OCI-LY7 (cell line): ENCODE measurements at regions of chr21 and their contacts with region 1.

Region 1: GRCh38 chr21:33324291-33325221 is at the start of gene IFNAR1:
- DNase-seq: peak; percentile 98
- H3K4me3 ChIP-seq: peak within 1 kb of the TSS; percentile 79
- H3K27ac ChIP-seq: peak within 1 kb of the TSS; percentile 87
- H3K4me1 ChIP-seq: peaks cover 36% of the 10 kb centered on the region
- CTCF ChIP-seq: 0 out of 2 replicates have a peak, but pooled peaks have one; percentile 25
- total RNA-seq, gene IFNAR1: 17.0 and 18.1 TPM in 2 replicates

Region 2: GRCh38 chr21:33151941-33152731 is 172.4 kb before region 1 on chr21:
- CTCF ChIA-PET with region 1: no interaction called
- POLR2A ChIA-PET with region 1: no interaction called
- intact Hi-C with region 1: no loop called
- DNase-seq: no peak
- H3K4me3 ChIP-seq: no peak overlapping the region
- H3K27ac ChIP-seq: no peak overlapping the region
- H3K4me1 ChIP-seq: no peaks in the 10 kb centered on the region
- CTCF ChIP-seq: no peak

Region 3: DNA sequence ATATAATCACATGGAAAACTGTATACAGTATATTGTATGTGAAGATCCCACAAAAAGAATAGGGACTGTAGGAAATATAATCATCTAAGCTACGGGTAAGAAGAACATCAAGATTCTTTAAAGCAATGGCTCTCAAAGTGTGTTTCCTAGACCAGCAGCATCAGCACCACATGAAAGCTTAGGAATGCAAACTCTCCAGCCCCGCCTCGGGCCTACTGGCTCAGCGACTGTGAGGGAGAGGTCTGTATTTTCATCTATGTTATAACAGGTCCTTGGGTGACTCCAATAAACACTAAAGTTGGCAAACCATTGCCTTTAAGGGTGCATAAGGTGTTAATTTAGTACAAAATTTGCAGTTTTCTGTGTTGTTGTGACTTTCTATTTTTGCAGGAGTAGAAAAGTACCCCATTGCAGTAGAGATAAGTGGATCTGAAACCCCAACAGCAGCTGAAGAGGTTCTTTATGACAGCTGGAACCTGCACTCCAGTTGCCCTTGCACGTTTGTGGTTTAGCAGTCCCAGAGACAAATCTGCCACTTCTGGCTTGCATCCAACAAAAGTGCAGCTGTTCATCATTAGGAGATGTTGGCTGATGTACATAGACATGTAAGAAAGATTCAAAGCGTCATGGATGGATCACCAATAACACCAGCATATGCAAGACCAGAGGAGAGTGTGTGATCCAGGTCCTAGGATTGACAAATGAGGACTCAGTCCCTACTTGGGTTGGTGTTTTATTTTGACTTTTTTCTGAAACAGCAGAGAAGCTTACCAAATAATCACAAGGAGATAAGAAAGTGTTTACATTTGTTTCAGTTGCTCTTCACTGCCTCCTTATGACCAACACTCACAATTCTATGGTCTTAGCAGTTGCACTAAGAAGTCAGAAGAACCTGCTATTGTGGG is 15.7 kb before region 1 on chr21:
- CTCF ChIA-PET with region 1: interaction called, 3 read pairs
- POLR2A ChIA-PET with region 1: interaction called, 19 read pairs
- intact Hi-C with region 1: no loop called
- DNase-seq: peak; percentile 100
- H3K4me3 ChIP-seq: peak overlapping the region; percentile 42
- H3K27ac ChIP-seq: peak overlapping the region; percentile 99
- H3K4me1 ChIP-seq: peaks cover 100% of the 10 kb centered on the region
- CTCF ChIP-seq: peak; percentile 80

Region 4: GRCh38 chr21:33339918-33340317 is 15.4 kb after region 1 on chr21:
- CTCF ChIA-PET with region 1: interaction called, 3 read pairs
- POLR2A ChIA-PET with region 1: interaction called, 14 read pairs
- intact Hi-C with region 1: no loop called
- DNase-seq: no peak
- H3K4me3 ChIP-seq: no peak overlapping the region
- H3K27ac ChIP-seq: no peak overlapping the region
- H3K4me1 ChIP-seq: peaks cover 11% of the 10 kb centered on the region
- CTCF ChIP-seq: no peak

Region 5: GRCh38 chr21:33374450-33375096 is 50.0 kb after region 1 on chr21:
- CTCF ChIA-PET with region 1: no interaction called
- POLR2A ChIA-PET with region 1: interaction called, 4 read pairs
- intact Hi-C with region 1: loop called (anchors 2 kb)
- DNase-seq: peak; percentile 87
- H3K4me3 ChIP-seq: peak overlapping the region; percentile 50
- H3K27ac ChIP-seq: peak overlapping the region; percentile 96
- H3K4me1 ChIP-seq: peaks cover 76% of the 10 kb centered on the region
- CTCF ChIP-seq: peak; percentile 95